Calu3 (cell line): ENCODE measurements at regions of chr11 and their contacts with region 1.

Region 1: GRCh38 chr11:111694851-111695250 is 71.3 kb downstream of the PPP2R1B start:
- DNase-seq: peak; percentile 25
- H3K4me3 Mint-ChIP-seq: no peak overlapping the region
- H3K27ac Mint-ChIP-seq: no peak overlapping the region
- H3K4me1 Mint-ChIP-seq: peaks cover 21% of the 10 kb centered on the region
- H3K27me3 Mint-ChIP-seq: no peaks in the 10 kb centered on the region
- CTCF ChIP-seq: no peak

Region 2: GRCh38 chr11:111635706-111636045 is 59.2 kb before region 1 on chr11:
- CTCF ChIA-PET with region 1: interaction called, 3 read pairs
- intact Hi-C with region 1: loop called (anchors 5 kb)
- DNase-seq: no peak
- H3K4me3 Mint-ChIP-seq: no peak overlapping the region
- H3K27ac Mint-ChIP-seq: no peak overlapping the region
- H3K4me1 Mint-ChIP-seq: peaks cover 52% of the 10 kb centered on the region
- H3K27me3 Mint-ChIP-seq: no peaks in the 10 kb centered on the region
- CTCF ChIP-seq: no peak